Dorsolateral prefrontal cortex (tissue), 120 donors: ENCODE measurements at regions of chr16 and their contacts with region 1.

Region 1: GRCh38 chr16:50210266-50211038 is 55.9 kb upstream of the ADCY7 start:
- DNase-seq: peak; percentile 58 to 84 (median 78)
- H3K4me3 ChIP-seq: peak overlapping the region in 3 of 59 donors; percentile 7 to 17 (median 13)
- H3K27ac ChIP-seq: peak overlapping the region in 48 of 59 donors; percentile 3 to 79 (median 49)
- H3K27me3 ChIP-seq: no peaks in the 10 kb centered on the region
- CTCF ChIP-seq: peak; percentile 20 to 90 (median 73)

Region 2: GRCh38 chr16:50024684-50025536 is 185.5 kb before region 1 on chr16 and contains the start of gene CNEP1R1:
- intact Hi-C with region 1: loop called (anchors 2 to 5 kb)
- DNase-seq: peak; percentile 87 to 95 (median 94)
- H3K4me3 ChIP-seq: peak within 1 kb of the TSS; percentile 71 to 100 (median 99)
- H3K27ac ChIP-seq: peak within 1 kb of the TSS in 55 of 59 donors; percentile 27 to 93 (median 81)
- H3K27me3 ChIP-seq: no peaks in the 10 kb centered on the region
- CTCF ChIP-seq: peak; percentile 97 to 100 (median 100)
- total RNA-seq, gene CNEP1R1: 16.8 to 35.7 (median 24.8) TPM

Region 3: GRCh38 chr16:50065624-50066481 is 144.6 kb before region 1 on chr16 and contains the start of gene HEATR3:
- intact Hi-C with region 1: loop called (anchors 2 to 10 kb)
- DNase-seq: peak; percentile 82 to 94 (median 90)
- H3K4me3 ChIP-seq: peak within 1 kb of the TSS; percentile 67 to 100 (median 97)
- H3K27ac ChIP-seq: peak within 1 kb of the TSS; percentile 68 to 100 (median 98)
- H3K27me3 ChIP-seq: no peaks in the 10 kb centered on the region
- CTCF ChIP-seq: peak in 26 of 56 donors; percentile 2 to 40 (median 16)
- total RNA-seq, gene HEATR3: 11.3 to 36.1 (median 20.5) TPM

Region 4: DNA sequence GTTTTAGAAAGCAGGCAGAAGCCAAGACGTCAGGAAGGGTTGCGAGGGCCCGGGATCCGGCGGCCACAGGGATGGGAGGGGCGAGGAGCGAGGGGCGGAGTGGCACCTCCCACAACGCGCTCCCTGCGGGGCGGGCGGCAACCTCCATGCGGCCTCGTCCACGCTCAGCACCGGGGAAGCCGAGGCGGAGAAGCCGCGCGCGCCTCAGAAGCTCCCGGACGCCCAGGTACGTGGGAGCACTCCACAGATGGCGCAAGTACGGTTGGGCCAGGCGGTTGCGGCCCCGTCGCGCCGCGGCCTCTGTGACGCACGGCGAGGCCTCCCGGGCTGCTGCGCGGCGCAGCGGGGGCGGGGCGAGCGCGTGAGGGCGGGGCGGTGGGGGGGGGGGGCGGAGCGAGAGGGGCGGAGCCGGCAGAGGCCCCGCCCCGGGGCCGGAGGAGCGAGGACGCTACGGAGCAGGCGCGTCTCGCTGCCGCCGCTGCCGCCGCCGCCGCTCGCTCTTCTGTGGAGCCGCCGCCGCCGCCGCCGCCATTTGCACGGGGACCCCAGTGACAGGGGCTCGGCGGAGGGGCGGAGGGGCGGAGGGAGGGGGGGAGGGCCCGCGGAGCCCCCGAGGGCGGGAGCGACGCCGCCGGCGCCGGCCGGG is 57.5 kb before region 1 on chr16 and contains the start of gene TENT4B:
- intact Hi-C with region 1: loop called (anchors 5 kb)
- DNase-seq: peak; percentile 67 to 90 (median 79)
- H3K4me3 ChIP-seq: peak within 1 kb of the TSS; percentile 78 to 97 (median 90)
- H3K27ac ChIP-seq: peak within 1 kb of the TSS; percentile 80 to 98 (median 94)
- H3K27me3 ChIP-seq: no peaks in the 10 kb centered on the region
- CTCF ChIP-seq: peak in 9 of 56 donors; percentile 6 to 42 (median 10)
- total RNA-seq, gene TENT4B: 9.9 to 37.1 (median 18.3) TPM

Region 5: GRCh38 chr16:50354629-50355456 is 144.4 kb after region 1 on chr16:
- intact Hi-C with region 1: loop called in 1 of 2 experiments (anchors 5 kb)
- DNase-seq: no peak
- H3K4me3 ChIP-seq: no peak overlapping the region
- H3K27ac ChIP-seq: no peak overlapping the region
- H3K27me3 ChIP-seq: no peaks in the 10 kb centered on the region
- CTCF ChIP-seq: peak in 55 of 56 donors; percentile 20 to 81 (median 57)

Region 6: GRCh38 chr16:50509521-50510341 is 299.3 kb after region 1 on chr16:
- intact Hi-C with region 1: no loop called
- DNase-seq: peak in 1 of 10 donors; percentile 43
- H3K4me3 ChIP-seq: no peak overlapping the region
- H3K27ac ChIP-seq: no peak overlapping the region
- H3K27me3 ChIP-seq: no peaks in the 10 kb centered on the region
- CTCF ChIP-seq: peak; percentile 30 to 71 (median 54)

Region 7: DNA sequence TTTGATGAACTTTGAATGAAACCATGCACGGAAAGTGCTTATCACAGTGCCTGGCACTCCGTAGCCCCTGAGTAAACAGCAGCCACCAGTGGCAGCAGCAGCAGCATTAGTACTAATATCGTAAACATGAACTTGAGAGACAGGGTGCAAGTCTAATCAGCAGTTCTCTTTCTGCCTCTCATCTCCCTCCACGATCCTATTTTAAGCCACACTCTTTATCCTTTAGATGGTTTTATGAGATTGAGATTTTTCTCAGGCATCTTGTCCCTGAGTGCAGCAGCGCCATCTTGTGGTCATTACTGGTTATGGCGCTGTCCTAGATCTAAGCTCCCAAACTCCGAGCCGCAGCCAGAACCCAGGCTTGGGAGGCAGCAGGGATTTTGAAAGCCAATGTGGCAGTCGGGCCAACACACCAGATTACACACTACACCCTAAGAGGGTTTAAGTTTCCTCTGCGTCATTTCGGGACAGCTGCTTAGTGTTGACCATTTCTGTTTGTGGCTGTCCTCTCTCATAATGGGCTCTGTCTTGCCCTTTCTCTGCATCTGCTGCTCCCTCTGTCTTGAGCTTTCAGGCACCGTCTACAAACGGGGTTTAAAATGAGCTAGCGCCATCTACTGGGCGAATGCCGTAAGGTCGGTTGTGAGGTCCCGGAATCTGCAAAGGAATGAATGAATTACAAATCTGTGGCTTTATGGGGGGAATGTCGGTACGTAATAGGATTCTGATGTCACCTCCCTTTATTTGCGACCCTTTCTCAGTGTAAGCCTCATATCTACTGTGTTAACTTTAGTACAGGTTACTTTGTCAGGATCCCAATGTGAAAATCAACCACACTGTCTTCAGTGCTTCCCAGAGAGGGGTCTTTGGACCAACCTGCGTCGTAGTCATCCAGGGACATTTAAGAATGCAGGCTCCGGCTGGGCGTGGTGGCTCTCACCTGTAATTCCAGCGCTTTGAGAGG is 595.9 kb after region 1 on chr16:
- intact Hi-C with region 1: loop called in 1 of 2 experiments (anchors 5 kb)
- DNase-seq: peak; percentile 80 to 93 (median 84)
- H3K4me3 ChIP-seq: peak overlapping the region in 56 of 59 donors; percentile 17 to 62 (median 47)
- H3K27ac ChIP-seq: peak overlapping the region; percentile 69 to 96 (median 92)
- H3K27me3 ChIP-seq: no peaks in the 10 kb centered on the region
- CTCF ChIP-seq: peak; percentile 81 to 100 (median 97)